MCF 10A (cell line): ENCODE measurements at regions of chr1 and their contacts with region 1.

Region 1: DNA sequence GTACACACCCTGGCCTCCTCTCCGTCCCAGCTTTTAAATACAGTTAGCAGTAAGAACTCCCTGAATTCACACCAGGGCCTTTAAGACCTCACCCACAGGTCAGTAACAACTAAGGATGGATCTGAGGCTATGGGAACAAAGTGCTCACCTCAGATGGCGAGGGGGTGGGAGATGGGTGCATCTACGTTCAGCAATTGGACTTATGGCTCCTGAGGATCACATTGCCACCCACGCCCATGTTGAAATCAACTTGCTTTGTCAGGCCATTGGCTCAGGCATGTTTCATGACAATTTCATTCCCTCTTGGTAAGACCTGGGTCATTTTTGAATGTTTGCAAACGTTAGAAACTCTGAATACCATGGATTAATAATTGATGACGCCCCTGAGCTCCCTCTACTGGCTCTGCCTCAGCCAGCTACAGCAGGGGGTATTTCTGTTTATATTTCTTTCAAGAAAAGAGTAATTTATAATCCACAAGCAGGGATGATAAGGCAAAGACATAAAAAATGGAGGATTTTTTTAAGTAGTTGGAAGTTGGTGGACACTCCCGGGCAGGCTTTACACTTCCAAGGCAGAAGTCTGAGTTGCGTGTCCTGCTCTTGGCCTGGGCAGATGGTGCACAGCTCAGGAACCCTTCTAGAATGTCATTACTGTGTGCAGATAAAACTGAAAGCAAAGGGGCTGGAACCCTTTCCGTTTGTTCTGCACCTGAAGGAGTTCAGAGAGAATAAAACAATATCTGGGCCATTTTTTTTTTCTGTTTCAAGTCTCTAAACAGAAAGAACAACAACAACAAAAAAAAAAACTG is 13.7 kb upstream of the LBR start:
- DNase-seq: no peak
- H3K4me3 Mint-ChIP-seq: no peak overlapping the region
- H3K27ac Mint-ChIP-seq: no peak overlapping the region
- H3K4me1 Mint-ChIP-seq: peaks cover 19% of the 10 kb centered on the region
- H3K27me3 Mint-ChIP-seq: no peaks in the 10 kb centered on the region
- CTCF ChIP-seq: no peak

Region 2: DNA sequence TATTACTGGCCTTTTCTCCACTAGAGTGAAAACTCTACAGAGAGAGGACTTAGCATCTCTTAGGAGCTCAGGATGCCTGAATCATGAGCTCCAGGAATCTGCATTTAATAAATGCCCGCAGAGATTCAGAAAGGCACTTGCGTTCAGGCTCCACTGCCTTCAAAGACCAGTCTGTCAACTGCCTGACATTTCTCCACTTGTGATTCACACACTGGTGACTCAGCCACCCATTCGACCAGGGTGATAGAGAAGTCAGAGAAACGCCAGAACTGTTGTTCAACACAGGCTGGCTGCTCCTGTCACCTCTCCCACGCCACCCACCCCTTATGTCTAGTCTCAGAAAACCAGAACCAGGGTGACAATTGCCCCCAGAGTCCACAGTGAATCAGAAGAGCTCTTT is 13.2 kb after region 1 on chr1:
- CTCF ChIA-PET with region 1: interaction called, 10 read pairs
- POLR2A ChIA-PET with region 1: interaction called, 58 read pairs
- intact Hi-C with region 1: no loop called
- DNase-seq: peak; percentile 96
- H3K4me3 Mint-ChIP-seq: peak overlapping the region; percentile 2
- H3K27ac Mint-ChIP-seq: peak overlapping the region; percentile 60
- H3K4me1 Mint-ChIP-seq: peaks cover 61% of the 10 kb centered on the region
- H3K27me3 Mint-ChIP-seq: no peaks in the 10 kb centered on the region
- CTCF ChIP-seq: no peak